Common myeloid progenitor, CD34-positive (primary cell): ENCODE measurements at regions of chr2 and their contacts with region 1.

Region 1: DNA sequence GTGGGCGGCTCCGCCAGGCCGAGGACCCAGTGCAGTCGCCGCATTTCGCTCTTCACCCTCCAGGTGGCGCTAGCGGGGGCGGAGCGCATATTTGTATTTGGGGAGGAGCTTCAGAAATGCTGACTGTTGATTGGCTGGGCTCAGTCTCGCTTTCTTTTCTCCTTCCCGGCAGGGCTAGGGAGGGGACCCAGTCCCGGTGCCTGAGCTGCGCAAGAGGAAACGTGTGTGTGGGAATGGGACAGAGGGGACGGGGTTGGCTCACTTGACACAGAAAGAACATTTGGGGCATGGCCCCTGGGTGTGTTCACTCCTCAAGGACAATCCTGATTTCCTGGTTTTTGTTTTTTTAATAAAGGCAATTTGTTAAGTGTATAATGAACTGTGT is 20.3 kb upstream of the DNMT3A start:
- DNase-seq: peak; percentile 91 to 95 (median 92)
- H3K4me3 ChIP-seq: peak overlapping the region; percentile 37 to 90 (median 77)
- H3K27ac ChIP-seq: peak overlapping the region; percentile 27 to 75
- H3K4me1 ChIP-seq: peaks cover 0 to 14% (median 10%) of the 10 kb centered on the region in 4 experiments
- H3K27me3 ChIP-seq: no peaks in the 10 kb centered on the region

Region 2: GRCh38 chr2:25349397-25349796 is 12.6 kb before region 1 on chr2:
- CTCF ChIA-PET with region 1: interaction called, 10 read pairs
- POLR2A ChIA-PET with region 1: interaction called, 3 read pairs
- DNase-seq: no peak
- H3K4me3 ChIP-seq: no peak overlapping the region
- H3K27ac ChIP-seq: no peak overlapping the region
- H3K4me1 ChIP-seq: no peaks in the 10 kb centered on the region
- H3K27me3 ChIP-seq: no peaks in the 10 kb centered on the region

Region 3: GRCh38 chr2:25389161-25389560 is 27.1 kb after region 1 on chr2:
- CTCF ChIA-PET with region 1: no interaction called
- POLR2A ChIA-PET with region 1: no interaction called
- DNase-seq: no peak
- H3K4me3 ChIP-seq: no peak overlapping the region
- H3K27ac ChIP-seq: no peak overlapping the region
- H3K4me1 ChIP-seq: no peaks in the 10 kb centered on the region
- H3K27me3 ChIP-seq: no peaks in the 10 kb centered on the region